Activated CD4-positive, alpha-beta memory T cell treated with anti-CD3 and anti-CD28 coated beads, Interleukin-2, amount 10 ng/mL, durations not matched to agents 7 days and 5 days (primary cell): ENCODE measurements at regions of chr13 and their contacts with region 1.

Region 1: DNA sequence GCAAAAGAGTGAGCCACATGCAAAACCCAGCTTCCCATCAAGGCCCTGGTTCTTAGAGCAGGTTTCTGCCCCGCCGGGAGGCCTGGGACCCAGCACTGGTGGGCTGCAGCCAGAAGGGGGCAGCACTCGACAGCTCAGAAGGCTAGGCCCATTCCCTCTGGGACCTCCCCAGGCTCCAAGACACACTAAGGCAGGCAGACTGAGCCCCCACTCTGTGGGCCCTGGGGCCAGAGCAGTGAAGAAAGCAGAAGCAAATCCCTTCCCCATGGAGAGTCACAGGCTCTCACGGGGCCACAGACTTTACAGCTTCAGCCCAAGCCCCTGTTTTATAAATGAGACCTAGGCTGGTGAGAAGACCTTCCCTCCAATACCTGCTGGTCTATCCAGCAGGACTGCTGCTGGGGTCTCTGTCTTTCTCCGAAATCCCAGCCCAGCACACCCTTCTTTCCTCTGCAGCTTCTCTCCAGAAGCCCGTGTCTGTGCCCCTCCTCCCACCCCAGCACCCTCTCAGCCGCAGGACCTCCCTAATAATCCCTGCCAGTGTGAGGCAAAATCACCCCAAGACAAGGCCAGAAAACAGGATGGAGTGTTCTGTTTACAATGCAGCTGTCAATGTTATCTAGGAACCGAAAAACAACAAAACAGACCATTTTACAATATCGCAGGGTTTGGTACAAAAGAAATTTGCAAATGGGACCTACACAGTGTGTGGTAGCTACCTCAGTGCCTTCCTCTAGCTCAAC is 109.3 kb downstream of the ABCC4 start:
- DNase-seq: peak; percentile 66
- H3K4me3 Mint-ChIP-seq: no peak overlapping the region
- H3K27ac Mint-ChIP-seq: no peak overlapping the region
- H3K4me1 Mint-ChIP-seq: peaks cover 12% of the 10 kb centered on the region
- H3K27me3 Mint-ChIP-seq: no peaks in the 10 kb centered on the region

Region 2: DNA sequence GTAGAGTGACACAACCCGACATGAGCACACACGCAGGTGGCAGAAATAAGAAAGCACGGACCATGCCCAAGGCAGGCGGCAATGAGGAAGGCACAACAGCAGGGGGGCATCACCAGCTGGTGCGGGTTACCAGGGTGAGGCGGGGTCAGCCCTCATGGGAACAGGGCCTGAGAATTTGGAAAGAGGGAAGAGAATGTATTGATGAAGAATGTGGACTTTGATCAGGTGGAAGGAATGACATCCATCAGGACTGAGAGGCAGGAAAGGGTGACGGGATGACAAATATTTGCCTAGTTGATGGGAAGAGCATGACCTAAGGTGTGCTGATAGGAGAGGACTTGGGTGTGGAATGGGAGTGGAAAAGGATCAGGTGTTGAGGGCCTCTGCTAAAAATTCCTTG is 68.3 kb before region 1 on chr13:
- CTCF ChIA-PET with region 1: no interaction called
- POLR2A ChIA-PET with region 1: no interaction called
- DNase-seq: no peak
- H3K4me3 Mint-ChIP-seq: no peak overlapping the region
- H3K27ac Mint-ChIP-seq: no peak overlapping the region
- H3K4me1 Mint-ChIP-seq: peaks cover 5% of the 10 kb centered on the region
- H3K27me3 Mint-ChIP-seq: no peaks in the 10 kb centered on the region

Region 3: GRCh38 chr13:95207769-95208366 is 15.9 kb after region 1 on chr13:
- CTCF ChIA-PET with region 1: interaction called, 12 read pairs
- POLR2A ChIA-PET with region 1: interaction called, 3 read pairs
- DNase-seq: no peak
- H3K4me3 Mint-ChIP-seq: no peak overlapping the region
- H3K27ac Mint-ChIP-seq: no peak overlapping the region
- H3K4me1 Mint-ChIP-seq: no peaks in the 10 kb centered on the region
- H3K27me3 Mint-ChIP-seq: no peaks in the 10 kb centered on the region

Region 4: GRCh38 chr13:95301183-95301967 is 109.4 kb after region 1 on chr13 and contains the start of gene ABCC4:
- CTCF ChIA-PET with region 1: interaction called, 21 read pairs
- POLR2A ChIA-PET with region 1: interaction called, 4 read pairs
- DNase-seq: peak; percentile 63
- H3K4me3 Mint-ChIP-seq: peak within 1 kb of the TSS; percentile 76
- H3K27ac Mint-ChIP-seq: no peak within 1 kb of the TSS
- H3K4me1 Mint-ChIP-seq: peaks cover 23% of the 10 kb centered on the region
- H3K27me3 Mint-ChIP-seq: peaks cover 6% of the 10 kb centered on the region
- total RNA-seq, gene ABCC4: 3.8 to 4.5 TPM

Region 5: DNA sequence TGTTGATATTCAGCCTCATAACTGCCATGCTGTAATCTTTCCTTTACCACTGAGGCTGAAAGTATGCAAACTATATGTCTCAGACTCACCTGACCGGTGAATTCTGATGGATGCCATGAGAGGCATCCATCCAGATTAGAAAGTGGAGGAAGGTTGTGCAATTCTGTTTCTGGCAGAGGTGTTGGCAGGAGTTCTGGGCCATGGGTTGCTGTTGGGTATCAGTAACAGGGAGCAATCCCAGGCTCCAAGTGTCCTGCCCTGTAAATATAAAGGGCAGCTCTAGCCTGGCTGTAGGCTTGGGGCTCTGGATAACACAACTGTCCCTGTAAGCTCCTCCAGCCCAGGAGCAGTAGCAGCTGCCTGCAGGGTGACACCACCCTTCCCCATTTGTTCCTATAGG is 186.6 kb after region 1 on chr13:
- CTCF ChIA-PET with region 1: interaction called, 108 read pairs
- POLR2A ChIA-PET with region 1: interaction called, 7 read pairs
- DNase-seq: no peak
- H3K4me3 Mint-ChIP-seq: no peak overlapping the region
- H3K27ac Mint-ChIP-seq: no peak overlapping the region
- H3K4me1 Mint-ChIP-seq: peaks cover 5% of the 10 kb centered on the region
- H3K27me3 Mint-ChIP-seq: peaks cover 3% of the 10 kb centered on the region

Region 6: DNA sequence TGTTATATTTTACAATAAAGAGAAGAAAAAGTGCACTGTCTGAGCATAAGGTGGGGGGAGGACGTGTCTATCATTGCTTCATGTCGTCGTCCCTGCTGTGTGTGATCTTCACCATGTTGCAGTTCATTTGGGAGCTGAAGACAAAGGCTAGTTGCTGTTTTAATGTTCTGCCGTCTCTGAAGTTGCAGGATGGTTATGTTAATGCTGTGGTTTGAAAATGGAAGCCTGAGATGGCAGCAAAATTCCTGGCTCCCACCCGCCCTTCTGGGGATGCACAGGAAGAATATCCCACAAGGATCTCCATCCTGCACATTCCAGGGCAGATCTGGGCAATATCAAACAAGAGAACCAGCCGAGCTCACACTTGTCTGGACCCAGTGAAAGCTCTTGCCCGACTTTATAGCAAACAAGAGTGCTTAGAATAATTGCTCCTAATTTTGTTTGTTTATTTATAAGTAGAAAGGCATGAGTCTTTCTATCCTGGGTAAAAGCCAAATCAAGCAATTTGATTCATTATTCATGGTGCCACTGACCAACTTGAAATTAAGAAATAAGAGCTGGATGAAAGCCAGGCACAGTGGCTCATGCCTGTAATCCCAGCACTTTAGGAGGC is 219.5 kb after region 1 on chr13:
- CTCF ChIA-PET with region 1: interaction called, 223 read pairs
- POLR2A ChIA-PET with region 1: no interaction called
- DNase-seq: no peak
- H3K4me3 Mint-ChIP-seq: no peak overlapping the region
- H3K27ac Mint-ChIP-seq: no peak overlapping the region
- H3K4me1 Mint-ChIP-seq: no peaks in the 10 kb centered on the region
- H3K27me3 Mint-ChIP-seq: no peaks in the 10 kb centered on the region

Region 7: DNA sequence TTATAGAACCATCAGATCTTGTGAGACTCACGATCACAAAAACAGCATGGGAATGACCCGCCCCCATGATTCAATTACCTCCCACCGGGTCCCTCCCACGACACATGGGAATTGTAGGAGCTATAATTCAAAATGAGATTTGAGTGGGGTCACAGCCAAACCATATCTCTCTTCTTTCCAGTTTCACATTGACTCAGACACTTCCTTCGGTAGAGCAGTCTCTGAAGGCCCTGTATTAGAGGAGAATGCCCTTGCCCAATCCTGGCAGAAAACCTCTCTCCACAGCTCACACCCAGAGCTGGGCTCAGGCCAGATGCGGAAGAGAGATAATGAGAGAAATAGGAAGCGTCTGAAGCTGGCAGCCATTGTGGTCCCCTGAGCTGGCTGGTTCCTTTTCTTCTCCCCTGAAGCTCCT is 288.1 kb after region 1 on chr13:
- CTCF ChIA-PET with region 1: interaction called, 34 read pairs
- POLR2A ChIA-PET with region 1: interaction called, 3 read pairs
- DNase-seq: no peak
- H3K4me3 Mint-ChIP-seq: no peak overlapping the region
- H3K27ac Mint-ChIP-seq: no peak overlapping the region
- H3K4me1 Mint-ChIP-seq: peaks cover 22% of the 10 kb centered on the region
- H3K27me3 Mint-ChIP-seq: peaks cover 9% of the 10 kb centered on the region